OCI-LY7 (cell line): ENCODE measurements at regions of chr16 and their contacts with region 1.

Region 1: GRCh38 chr16:23182460-23183309 is at the start of gene SCNN1G:
- DNase-seq: peak; percentile 81
- H3K4me3 ChIP-seq: no peak within 1 kb of the TSS
- H3K27ac ChIP-seq: no peak within 1 kb of the TSS
- H3K4me1 ChIP-seq: peaks cover 4% of the 10 kb centered on the region
- CTCF ChIP-seq: peak; percentile 87
- total RNA-seq, gene SCNN1G: not detected in 2 replicates

Region 2: DNA sequence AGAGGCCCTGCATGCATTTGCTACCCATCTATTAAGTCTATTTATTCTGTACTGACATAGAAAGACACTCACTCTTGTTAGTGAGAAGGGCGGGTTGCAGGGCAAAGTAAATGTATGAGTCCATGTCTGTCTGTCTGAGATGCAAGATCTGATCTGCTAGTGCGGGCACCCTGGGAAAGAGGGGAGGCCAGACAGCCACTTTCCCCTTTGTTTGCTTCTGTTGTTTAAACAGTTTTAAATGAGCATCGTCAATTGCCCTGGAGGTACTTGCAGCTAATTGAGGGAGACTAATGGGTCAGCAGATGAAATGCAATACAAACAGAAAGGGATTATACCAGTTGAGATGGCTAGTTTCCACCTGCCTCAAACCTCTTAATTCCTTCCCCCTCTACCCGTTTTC is 24.8 kb after region 1 on chr16:
- CTCF ChIA-PET with region 1: no interaction called
- POLR2A ChIA-PET with region 1: no interaction called
- intact Hi-C with region 1: no loop called
- DNase-seq: no peak
- H3K4me3 ChIP-seq: no peak overlapping the region
- H3K27ac ChIP-seq: no peak overlapping the region
- H3K4me1 ChIP-seq: no peaks in the 10 kb centered on the region
- CTCF ChIP-seq: no peak

Region 3: DNA sequence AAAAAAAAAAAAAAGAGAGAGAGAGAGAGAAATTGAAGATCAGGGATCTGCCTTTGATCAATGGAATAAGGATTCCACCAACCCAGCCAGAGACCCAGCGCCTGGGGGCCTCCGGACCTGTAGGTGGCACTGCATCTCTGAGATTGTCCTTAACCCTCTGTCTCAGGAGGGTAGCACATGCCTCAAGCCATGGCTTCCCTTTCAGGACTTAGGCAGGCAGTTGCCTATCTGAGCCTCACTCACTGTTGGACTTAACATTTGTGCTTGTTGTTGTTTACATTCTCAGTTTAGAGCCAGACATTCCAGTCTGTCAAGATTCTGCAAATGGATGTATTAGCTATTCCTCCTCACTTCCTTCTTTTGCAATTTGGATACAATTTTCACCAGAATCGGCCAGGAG is 114.3 kb after region 1 on chr16:
- CTCF ChIA-PET with region 1: no interaction called
- POLR2A ChIA-PET with region 1: no interaction called
- intact Hi-C with region 1: loop called (anchors 5 kb)
- DNase-seq: peak; percentile 58
- H3K4me3 ChIP-seq: no peak overlapping the region
- H3K27ac ChIP-seq: no peak overlapping the region
- H3K4me1 ChIP-seq: peaks cover 4% of the 10 kb centered on the region
- CTCF ChIP-seq: peak; percentile 79

Region 4: GRCh38 chr16:23539984-23540816 is 357.5 kb after region 1 on chr16:
- CTCF ChIA-PET with region 1: no interaction called
- POLR2A ChIA-PET with region 1: no interaction called
- intact Hi-C with region 1: no loop called
- DNase-seq: no peak
- H3K4me3 ChIP-seq: no peak overlapping the region
- H3K27ac ChIP-seq: no peak overlapping the region
- H3K4me1 ChIP-seq: no peaks in the 10 kb centered on the region
- CTCF ChIP-seq: no peak